ENCODE measurements at regions of chr6 and their contacts with region 1.

Region 1: DNA sequence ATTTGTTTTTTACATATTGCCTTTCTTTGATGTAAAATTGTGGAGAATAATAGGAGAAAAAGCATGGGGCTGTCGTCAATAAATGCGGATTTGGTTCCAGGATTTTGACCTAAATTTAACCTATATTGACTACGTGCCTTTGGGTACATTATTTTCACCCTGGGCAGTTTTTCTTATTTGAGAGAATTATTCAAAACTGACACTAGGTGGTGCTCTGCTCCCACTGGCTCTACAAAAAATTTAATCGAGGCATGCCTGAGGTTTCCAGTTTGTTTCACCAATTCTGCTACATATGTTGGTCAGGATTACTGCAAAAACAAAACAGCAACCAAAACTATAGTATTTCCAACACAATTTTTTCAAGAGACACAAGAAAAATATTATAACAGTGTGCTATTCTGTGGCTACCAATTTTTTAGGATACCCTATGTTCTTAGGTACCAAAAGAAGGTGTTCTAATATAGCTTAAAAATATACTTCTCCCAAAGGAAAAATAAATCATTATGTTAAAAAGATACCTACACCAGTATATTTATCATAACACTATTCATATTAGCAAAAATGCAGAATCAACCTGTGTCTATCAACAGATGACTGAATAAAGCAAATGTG is 48.6 kb upstream of the FABP7 start:
- DNase-seq: peak in 1 of 2 experiments; percentile 6
- ATAC-seq: peak in 1 of 2 experiments; percentile 55; a peak in 2 of 6 replicates
- H3K4me3 ChIP-seq: no peak overlapping the region
- H3K27ac ChIP-seq: no peak overlapping the region
- H3K4me1 ChIP-seq: no peaks in the 10 kb centered on the region
- CTCF ChIP-seq: peak; percentile 82
- EP300 ChIP-seq: no peak
- POLR2A ChIP-seq: no peak
- RAD21 ChIP-seq: peak; percentile 79 to 83

Region 2: DNA sequence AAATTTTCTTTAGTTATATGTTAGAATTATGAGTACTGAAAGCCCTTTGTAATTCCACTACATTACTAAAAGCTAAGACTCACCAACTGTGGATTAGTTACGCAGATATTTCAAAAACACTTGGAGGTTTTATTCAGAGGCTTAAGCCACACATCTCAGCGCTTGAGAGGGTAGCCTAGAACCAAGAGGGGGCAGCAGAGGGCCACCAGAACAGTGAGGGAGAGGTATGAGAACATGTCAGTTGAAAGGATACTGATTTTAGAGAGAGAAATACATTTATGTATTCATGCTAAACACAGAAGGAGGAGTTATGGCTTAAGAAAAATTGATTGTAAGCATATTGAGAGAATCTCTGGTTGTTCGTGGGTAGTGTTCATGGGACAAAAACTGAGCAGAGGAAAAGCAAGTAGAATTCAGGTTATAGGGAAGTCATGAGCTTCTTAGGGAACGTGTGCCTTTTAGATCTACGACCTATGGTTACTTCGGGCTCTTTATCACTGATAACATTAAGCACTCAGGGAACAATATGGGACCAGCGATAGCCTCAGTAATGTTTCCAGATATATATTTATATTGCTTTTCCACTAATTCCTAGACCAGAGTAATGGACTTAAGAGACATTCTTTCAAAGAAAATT is 238.8 kb before region 1 on chr6:
- CTCF ChIA-PET with region 1: interaction called, 12 read pairs
- POLR2A ChIA-PET with region 1: no interaction called
- DNase-seq: peak; percentile 37 to 63
- ATAC-seq: peak; percentile 99 to 100
- H3K4me3 ChIP-seq: no peak overlapping the region
- H3K27ac ChIP-seq: no peak overlapping the region
- H3K4me1 ChIP-seq: no peaks in the 10 kb centered on the region
- CTCF ChIP-seq: peak; percentile 68
- EP300 ChIP-seq: no peak
- POLR2A ChIP-seq: no peak
- RAD21 ChIP-seq: peak; percentile 62 to 81

Region 3: DNA sequence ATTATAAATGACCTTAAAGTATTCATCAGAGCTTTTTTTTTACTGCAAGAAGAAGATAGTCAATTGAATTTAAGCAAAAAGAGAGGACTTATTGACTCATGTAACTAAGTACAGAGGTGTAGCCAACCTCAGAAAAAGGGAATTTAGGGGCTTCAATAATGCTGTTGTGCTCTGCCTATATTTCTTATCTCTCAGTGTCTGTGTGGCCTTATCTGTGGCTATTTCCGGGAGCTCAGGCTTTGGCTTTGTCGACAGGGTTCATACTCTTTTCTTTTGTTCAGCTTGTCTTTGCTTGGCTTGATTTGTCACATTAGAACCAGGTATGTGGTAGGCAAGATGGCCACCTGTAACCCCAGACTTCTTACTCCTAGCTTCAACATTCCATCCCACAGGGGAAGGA is 10.1 kb after region 1 on chr6:
- CTCF ChIA-PET with region 1: interaction called, 19 read pairs
- POLR2A ChIA-PET with region 1: no interaction called
- DNase-seq: no peak
- ATAC-seq: no peak
- H3K4me3 ChIP-seq: no peak overlapping the region
- H3K27ac ChIP-seq: no peak overlapping the region
- H3K4me1 ChIP-seq: no peaks in the 10 kb centered on the region
- CTCF ChIP-seq: no peak
- EP300 ChIP-seq: no peak
- POLR2A ChIP-seq: no peak
- RAD21 ChIP-seq: no peak

Region 4: DNA sequence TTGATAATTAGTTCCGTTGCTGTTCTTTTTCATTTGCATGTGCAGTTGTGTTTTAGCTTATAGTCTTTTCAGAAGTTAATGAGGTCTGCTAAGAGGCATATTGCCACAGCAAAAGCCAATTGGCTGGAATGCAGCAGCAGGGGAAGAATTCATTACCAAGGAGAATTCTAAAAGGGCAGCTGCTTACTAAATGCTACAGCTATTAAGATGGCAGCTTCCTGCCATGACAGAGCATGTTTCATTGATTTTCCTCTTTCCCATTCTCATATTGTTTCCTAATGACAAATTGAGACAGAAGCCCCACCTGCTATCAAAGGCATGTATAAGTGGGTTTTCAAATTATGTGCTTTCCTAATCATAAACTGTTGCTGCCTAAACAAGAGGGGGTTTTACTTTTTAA is 331.8 kb after region 1 on chr6:
- CTCF ChIA-PET with region 1: no interaction called
- POLR2A ChIA-PET with region 1: no interaction called
- DNase-seq: no peak
- ATAC-seq: no peak
- H3K4me3 ChIP-seq: no peak overlapping the region
- H3K27ac ChIP-seq: no peak overlapping the region
- H3K4me1 ChIP-seq: no peaks in the 10 kb centered on the region
- CTCF ChIP-seq: no peak
- EP300 ChIP-seq: no peak
- POLR2A ChIP-seq: no peak
- RAD21 ChIP-seq: no peak

Measured in A549 (cell line).